ENCODE measurements at regions of chr9 and their contacts with region 1.

Region 1: GRCh38 chr9:98206754-98207153 is 14.3 kb upstream of the CORO2A start:
- DNase-seq: no peak
- ATAC-seq: no peak
- H3K4me3 Mint-ChIP-seq: no peak overlapping the region
- H3K27ac Mint-ChIP-seq: no peak overlapping the region
- H3K4me1 Mint-ChIP-seq: peaks cover 8% of the 10 kb centered on the region
- H3K27me3 Mint-ChIP-seq: no peaks in the 10 kb centered on the region
- CTCF ChIP-seq: no peak

Region 2: GRCh38 chr9:98074115-98074990 is 132.4 kb before region 1 on chr9:
- CTCF ChIA-PET with region 1: no interaction called
- POLR2A ChIA-PET with region 1: no interaction called
- intact Hi-C with region 1: loop called (anchors 1 kb)
- DNase-seq: peak; percentile 58
- ATAC-seq: peak; percentile 61
- H3K4me3 Mint-ChIP-seq: no peak overlapping the region
- H3K27ac Mint-ChIP-seq: peak overlapping the region; percentile 24
- H3K4me1 Mint-ChIP-seq: peaks cover 6% of the 10 kb centered on the region
- H3K27me3 Mint-ChIP-seq: no peaks in the 10 kb centered on the region
- CTCF ChIP-seq: peak; percentile 91

Region 3: DNA sequence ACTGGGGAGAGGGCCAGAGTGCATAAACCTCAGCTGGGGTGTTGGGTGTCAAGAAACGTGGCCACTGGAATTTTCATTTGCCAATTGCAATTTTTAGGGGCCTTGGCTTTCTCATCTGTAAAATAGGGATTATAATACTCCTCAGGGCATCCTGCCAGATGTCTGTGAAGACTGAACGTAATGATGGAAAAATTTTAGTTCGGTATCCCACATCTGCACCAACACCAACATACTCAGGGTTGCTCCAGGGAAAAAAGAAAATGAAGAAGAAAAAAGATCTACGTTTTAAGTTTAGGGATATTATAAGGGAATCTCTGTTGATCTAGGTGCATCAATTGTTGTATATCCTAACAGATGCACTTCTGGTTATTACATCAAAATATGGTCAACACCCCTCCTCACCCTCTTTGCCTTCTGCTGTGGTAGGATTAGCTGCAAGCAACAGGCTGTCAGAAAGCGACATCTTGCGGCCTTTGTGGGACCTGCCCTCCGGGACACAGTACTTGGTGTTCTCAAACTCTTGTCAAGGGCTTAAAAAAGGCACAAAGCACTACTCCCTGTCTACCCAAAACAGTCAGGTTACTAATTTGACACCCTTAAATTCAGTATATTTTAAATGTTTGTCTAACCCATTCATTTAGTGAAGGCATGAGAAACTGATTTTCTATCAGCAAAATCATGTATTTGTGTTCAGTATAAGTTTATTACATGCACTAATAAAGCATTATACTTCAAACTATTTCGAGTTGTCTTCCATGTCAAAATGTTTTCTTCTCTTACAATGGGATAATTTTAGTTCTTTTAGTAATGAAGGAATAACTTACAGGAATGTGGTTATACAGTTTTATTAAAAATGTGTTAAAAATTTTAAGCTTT is 57.0 kb after region 1 on chr9:
- CTCF ChIA-PET with region 1: interaction called, 21 read pairs
- POLR2A ChIA-PET with region 1: no interaction called
- intact Hi-C with region 1: loop called (anchors 1 kb)
- DNase-seq: peak; percentile 58
- ATAC-seq: peak; percentile 100
- H3K4me3 Mint-ChIP-seq: no peak overlapping the region
- H3K27ac Mint-ChIP-seq: no peak overlapping the region
- H3K4me1 Mint-ChIP-seq: no peaks in the 10 kb centered on the region
- H3K27me3 Mint-ChIP-seq: peaks cover 5% of the 10 kb centered on the region
- CTCF ChIP-seq: peak; percentile 86

Region 4: GRCh38 chr9:98455256-98456155 is 248.8 kb after region 1 on chr9:
- CTCF ChIA-PET with region 1: no interaction called
- POLR2A ChIA-PET with region 1: no interaction called
- intact Hi-C with region 1: no loop called
- DNase-seq: no peak
- ATAC-seq: no peak
- H3K4me3 Mint-ChIP-seq: no peak overlapping the region
- H3K27ac Mint-ChIP-seq: no peak overlapping the region
- H3K4me1 Mint-ChIP-seq: no peaks in the 10 kb centered on the region
- H3K27me3 Mint-ChIP-seq: peaks cover 18% of the 10 kb centered on the region
- CTCF ChIP-seq: no peak

Region 5: GRCh38 chr9:98775831-98776441 is 569.2 kb after region 1 on chr9:
- CTCF ChIA-PET with region 1: interaction called, 3 read pairs
- POLR2A ChIA-PET with region 1: no interaction called
- intact Hi-C with region 1: loop called (anchors 1 kb)
- DNase-seq: no peak
- ATAC-seq: peak; percentile 42
- H3K4me3 Mint-ChIP-seq: no peak overlapping the region
- H3K27ac Mint-ChIP-seq: no peak overlapping the region
- H3K4me1 Mint-ChIP-seq: no peaks in the 10 kb centered on the region
- H3K27me3 Mint-ChIP-seq: no peaks in the 10 kb centered on the region
- CTCF ChIP-seq: no peak

Region 6: GRCh38 chr9:98791147-98792095 is 584.7 kb after region 1 on chr9:
- CTCF ChIA-PET with region 1: no interaction called
- POLR2A ChIA-PET with region 1: no interaction called
- intact Hi-C with region 1: loop called (anchors 1 kb)
- DNase-seq: peak; percentile 60
- ATAC-seq: peak; percentile 72
- H3K4me3 Mint-ChIP-seq: no peak overlapping the region
- H3K27ac Mint-ChIP-seq: no peak overlapping the region
- H3K4me1 Mint-ChIP-seq: peaks cover 12% of the 10 kb centered on the region
- H3K27me3 Mint-ChIP-seq: no peaks in the 10 kb centered on the region
- CTCF ChIP-seq: peak; percentile 20

Measured in activated B cell treated with CpG ODN at 0.5 μM for 24 hours (primary cell).